Lower leg skin (tissue), 4 donors: ENCODE measurements at regions of chr4 and their contacts with region 1.

Region 1: GRCh38 chr4:138449799-138450337 is 207.7 kb upstream of the SLC7A11 start:
- DNase-seq: no peak
- H3K4me3 ChIP-seq: no peak overlapping the region
- CTCF ChIP-seq: no peak
- POLR2A ChIP-seq: no peak

Region 2: GRCh38 chr4:138190452-138190858 is 259.4 kb before region 1 on chr4:
- intact Hi-C with region 1: loop called (anchors 5 kb)
- DNase-seq: no peak
- H3K4me3 ChIP-seq: no peak overlapping the region
- CTCF ChIP-seq: no peak
- POLR2A ChIP-seq: no peak